Sigmoid colon (tissue), 7 donors: ENCODE measurements at regions of chr22 and their contacts with region 1.

Region 1: GRCh38 chr22:41543854-41544670 is at the start of gene POLR3H:
- DNase-seq: peak; percentile 99
- H3K4me3 ChIP-seq: peak within 1 kb of the TSS; percentile 68 to 93 (median 78)
- H3K27ac ChIP-seq: peak within 1 kb of the TSS; percentile 93 to 96 (median 94)
- H3K4me1 ChIP-seq: peaks cover 0 to 30% (median 28%) of the 10 kb centered on the region in 4 donors
- H3K27me3 ChIP-seq: no peaks in the 10 kb centered on the region
- CTCF ChIP-seq: peak; percentile 9 to 62 (median 50)
- EP300 ChIP-seq: peak in 1 of 4 donors; percentile 30
- POLR2A ChIP-seq: no peak
- total RNA-seq, gene POLR3H: 10.3 to 14.4 (median 12.2) TPM

Region 2: DNA sequence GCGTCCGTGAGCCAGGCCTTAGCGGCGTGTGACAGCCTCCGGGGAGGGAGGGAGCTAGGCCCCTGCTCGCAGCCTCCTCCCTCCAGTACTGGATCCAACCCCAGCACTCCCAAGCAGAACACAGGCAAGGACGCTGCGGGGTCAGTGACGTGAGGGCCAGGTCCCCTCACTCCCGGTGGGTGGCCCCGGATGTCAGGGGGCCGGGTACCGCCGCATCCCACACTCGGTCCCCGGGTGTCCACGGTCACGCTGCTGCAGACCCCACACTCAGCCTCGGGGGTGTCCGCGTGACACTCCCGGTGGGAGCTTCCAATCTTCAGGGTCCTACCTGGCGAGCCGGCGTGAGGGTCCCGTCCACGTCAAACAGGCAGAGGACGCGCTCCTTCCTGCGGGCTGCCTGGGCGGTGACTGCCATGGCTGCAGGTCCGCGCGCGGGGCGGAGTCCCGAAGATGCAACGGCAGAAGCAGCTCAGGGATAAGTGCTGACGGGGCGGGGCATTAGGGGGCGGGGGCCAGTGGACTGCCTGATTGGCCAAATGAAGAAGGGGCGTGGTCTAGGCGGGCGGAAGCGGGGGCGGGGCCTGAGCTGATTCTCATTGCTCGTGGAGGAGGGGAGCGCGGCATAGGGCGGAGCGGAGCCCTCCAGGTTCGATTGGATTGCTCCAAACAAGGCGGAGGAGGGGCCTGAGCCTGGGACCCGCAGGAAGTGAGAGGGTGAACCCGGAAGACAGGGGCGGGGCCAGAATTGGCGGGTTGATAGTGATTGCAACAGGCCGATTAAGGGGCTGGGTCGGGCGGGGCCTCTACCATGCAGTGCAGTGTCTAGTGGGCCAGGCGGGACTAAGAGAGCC is 45.6 kb after region 1 on chr22 and contains the start of gene PMM1:
- intact Hi-C with region 1: loop called (anchors 2 kb)
- DNase-seq: peak; percentile 100
- H3K4me3 ChIP-seq: peak within 1 kb of the TSS; percentile 77 to 96 (median 84)
- H3K27ac ChIP-seq: peak within 1 kb of the TSS; percentile 83 to 88 (median 86)
- H3K4me1 ChIP-seq: peaks cover 0 to 24% (median 17%) of the 10 kb centered on the region in 4 donors
- H3K27me3 ChIP-seq: no peaks in the 10 kb centered on the region
- CTCF ChIP-seq: no peak
- EP300 ChIP-seq: no peak
- POLR2A ChIP-seq: peak; percentile 95 to 97
- total RNA-seq, gene PMM1: 35.0 to 58.9 (median 43.6) TPM

Region 3: GRCh38 chr22:41596776-41597634 is 52.9 kb after region 1 on chr22:
- intact Hi-C with region 1: loop called (anchors 2 kb)
- DNase-seq: peak; percentile 79
- H3K4me3 ChIP-seq: no peak overlapping the region
- H3K27ac ChIP-seq: peak overlapping the region in 1 of 4 donors; percentile 13
- H3K4me1 ChIP-seq: no peaks in the 10 kb centered on the region
- H3K27me3 ChIP-seq: no peaks in the 10 kb centered on the region
- CTCF ChIP-seq: peak; percentile 61 to 81 (median 71)
- EP300 ChIP-seq: no peak
- POLR2A ChIP-seq: no peak

Region 4: DNA sequence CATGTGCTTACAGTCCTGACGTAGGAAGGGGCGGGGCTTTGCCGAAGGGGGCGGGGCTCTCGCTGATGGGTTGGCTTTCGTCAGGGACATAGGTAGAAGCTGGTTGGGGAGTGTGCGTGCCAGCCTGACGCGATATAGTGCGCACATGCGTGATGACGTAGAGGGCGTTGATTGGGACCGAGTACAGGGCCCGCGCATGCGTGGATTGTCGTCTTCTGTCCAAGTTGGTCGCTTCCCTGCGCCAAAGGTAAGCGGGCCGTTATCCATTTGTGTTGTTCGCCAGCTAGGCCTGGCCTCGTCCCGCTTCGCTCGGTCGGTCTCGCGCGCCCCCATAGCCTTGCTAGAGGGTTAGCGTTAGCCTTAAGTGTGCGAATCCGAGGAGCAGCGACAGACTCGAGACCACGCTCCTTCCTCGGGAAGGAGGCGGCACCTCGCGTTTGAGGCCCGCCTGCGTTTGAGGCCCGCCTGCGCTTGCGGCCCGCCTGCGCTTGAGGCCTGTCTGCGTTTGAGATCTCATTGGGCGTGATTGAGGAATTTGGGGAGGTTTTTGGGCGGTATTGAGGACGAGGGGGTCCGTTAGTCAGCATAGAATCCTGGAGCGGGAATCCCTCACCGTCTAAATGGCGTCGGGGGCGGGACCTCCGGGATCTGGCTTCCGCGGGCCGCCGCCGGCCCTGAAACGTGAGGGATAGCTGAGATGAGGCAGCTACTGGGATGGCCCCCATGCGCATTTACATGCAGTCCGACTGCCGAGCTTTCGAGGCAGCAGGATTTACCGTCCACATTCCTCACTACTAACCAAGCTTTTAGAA is 77.2 kb after region 1 on chr22 and contains the start of gene XRCC6:
- intact Hi-C with region 1: loop called (anchors 1 kb)
- DNase-seq: peak; percentile 100
- H3K4me3 ChIP-seq: peak within 1 kb of the TSS; percentile 74 to 95 (median 86)
- H3K27ac ChIP-seq: peak within 1 kb of the TSS; percentile 95 to 99 (median 98)
- H3K4me1 ChIP-seq: peaks cover 0 to 37% (median 31%) of the 10 kb centered on the region in 4 donors
- H3K27me3 ChIP-seq: no peaks in the 10 kb centered on the region
- CTCF ChIP-seq: no peak
- EP300 ChIP-seq: peak in 2 of 4 donors; percentile 59 to 84
- POLR2A ChIP-seq: peak; percentile 89 to 96
- total RNA-seq, gene XRCC6: 143 to 220 (median 202) TPM